PC-9 (cell line): ENCODE measurements at regions of chr2 and their contacts with region 1.

Region 1: GRCh38 chr2:112054847-112055729 is at the start of gene TMEM87B:
- DNase-seq: peak; percentile 82 to 96
- H3K4me3 ChIP-seq: peak within 1 kb of the TSS; percentile 87
- H3K27ac ChIP-seq: peak within 1 kb of the TSS; percentile 71
- H3K4me1 ChIP-seq: peaks cover 30% of the 10 kb centered on the region
- H3K27me3 ChIP-seq: no peaks in the 10 kb centered on the region
- CTCF ChIP-seq: no peak
- total RNA-seq, gene TMEM87B: 20.1 and 24.4 TPM in 2 replicates

Region 2: DNA sequence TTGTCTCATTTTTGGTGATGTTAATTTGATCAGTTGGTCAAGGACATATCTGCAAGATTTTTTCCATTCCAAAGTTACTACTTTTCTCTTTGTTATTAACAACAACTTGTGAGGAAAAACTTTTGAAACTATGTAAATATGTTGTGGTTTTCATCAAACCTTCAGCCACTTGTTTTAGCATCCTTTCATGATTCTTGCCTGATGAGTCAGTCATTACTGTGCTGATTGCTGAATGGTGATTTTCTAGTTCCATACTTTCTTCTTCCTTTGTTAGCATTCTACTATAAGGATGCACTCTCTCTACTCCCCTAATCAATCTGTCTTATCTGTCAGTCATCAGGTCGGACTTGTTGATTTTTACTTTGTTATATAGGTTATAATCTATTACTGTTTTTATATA is 10.9 kb after region 1 on chr2:
- CTCF ChIA-PET with region 1: no interaction called
- POLR2A ChIA-PET with region 1: interaction called, 10 read pairs
- intact Hi-C with region 1: no loop called
- DNase-seq: peak in 1 of 2 experiments; percentile 82
- H3K4me3 ChIP-seq: no peak overlapping the region
- H3K27ac ChIP-seq: peak overlapping the region; percentile 10
- H3K4me1 ChIP-seq: peaks cover 35% of the 10 kb centered on the region
- H3K27me3 ChIP-seq: no peaks in the 10 kb centered on the region
- CTCF ChIP-seq: no peak

Region 3: DNA sequence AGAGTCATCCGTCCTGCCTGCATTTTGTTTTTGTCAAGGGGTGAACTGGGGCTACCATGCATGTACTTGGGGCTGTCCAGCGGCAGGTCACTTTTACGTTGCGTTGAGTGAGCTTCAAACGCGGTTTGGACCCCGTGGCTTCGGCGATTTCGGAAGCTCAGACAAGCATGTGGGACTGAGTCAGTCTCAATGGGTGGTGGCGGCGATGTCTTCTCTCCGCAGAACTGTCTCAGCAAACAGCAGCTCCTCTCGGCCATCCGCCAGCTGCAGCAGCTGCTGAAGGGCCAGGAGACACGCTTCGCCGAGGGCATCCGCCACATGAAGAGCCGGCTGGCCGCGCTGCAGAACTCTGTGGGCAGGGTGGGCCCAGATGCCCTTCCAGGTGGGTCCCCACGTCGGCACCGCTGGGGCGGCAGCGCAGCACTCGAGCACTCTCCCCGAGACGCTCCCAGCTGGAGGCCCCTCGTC is 104.4 kb after region 1 on chr2:
- CTCF ChIA-PET with region 1: no interaction called
- POLR2A ChIA-PET with region 1: no interaction called
- intact Hi-C with region 1: no loop called
- DNase-seq: no peak
- H3K4me3 ChIP-seq: no peak overlapping the region
- H3K27ac ChIP-seq: no peak overlapping the region
- H3K4me1 ChIP-seq: no peaks in the 10 kb centered on the region
- H3K27me3 ChIP-seq: no peaks in the 10 kb centered on the region
- CTCF ChIP-seq: no peak

Region 4: DNA sequence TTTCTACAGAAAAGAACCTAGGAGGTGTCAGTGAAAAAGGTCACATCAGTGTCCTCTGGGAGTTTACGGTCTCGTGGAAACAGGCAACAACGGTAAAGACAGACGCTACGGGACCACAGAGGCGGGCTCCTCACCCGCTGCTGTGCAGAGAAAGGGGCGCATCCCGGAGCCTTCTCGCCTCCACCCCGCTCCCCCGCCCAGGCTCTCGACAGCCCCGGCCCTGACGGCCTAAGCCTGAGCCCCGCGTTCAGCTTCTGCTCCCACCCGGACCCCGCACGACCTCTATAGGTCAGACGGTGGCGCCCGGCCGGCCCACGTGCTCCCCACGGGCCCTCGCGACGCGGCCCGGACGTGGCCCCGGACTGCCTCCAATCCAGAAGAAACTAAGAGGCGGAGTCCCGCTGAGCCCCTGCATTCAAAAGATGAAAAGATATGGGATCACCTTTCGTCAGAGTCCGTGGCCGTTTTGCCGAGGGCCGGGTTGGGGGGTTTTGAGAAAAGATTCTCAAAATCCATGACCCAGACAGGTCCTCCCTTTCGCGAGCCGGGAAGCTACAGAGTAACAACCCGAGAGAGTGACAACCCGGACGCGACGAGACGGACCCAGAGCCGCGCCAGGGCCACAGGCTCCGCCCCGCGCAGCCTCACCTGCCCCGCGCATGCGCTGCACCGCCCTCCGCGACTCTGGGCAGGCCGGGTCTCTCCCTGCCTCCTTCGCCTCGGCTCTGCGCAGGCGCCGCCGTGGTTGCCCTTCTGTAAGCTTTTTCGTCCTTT is 199.6 kb after region 1 on chr2 and contains the start of gene ZC3H8:
- CTCF ChIA-PET with region 1: no interaction called
- POLR2A ChIA-PET with region 1: interaction called, 5 read pairs
- intact Hi-C with region 1: loop called (anchors 10 kb)
- DNase-seq: peak; percentile 74 to 95
- H3K4me3 ChIP-seq: peak within 1 kb of the TSS; percentile 77
- H3K27ac ChIP-seq: peak within 1 kb of the TSS; percentile 53
- H3K4me1 ChIP-seq: 0 out of 2 replicates have a peak, but pooled peaks cover 5% of the 10 kb centered on the region
- H3K27me3 ChIP-seq: no peaks in the 10 kb centered on the region
- CTCF ChIP-seq: no peak
- total RNA-seq, gene ZC3H8: 8.6 and 11.3 TPM in 2 replicates